ENCODE measurements at regions of chr17 and their contacts with region 1.

Region 1: GRCh38 chr17:76408052-76408849 is 23.8 kb downstream of the SPHK1 start:
- DNase-seq: peak in 1 of 2 donors; percentile 76
- ATAC-seq: peak in 3 of 4 donors; percentile 42 to 55 (median 49)
- H3K4me3 ChIP-seq: no peak overlapping the region
- H3K27ac ChIP-seq: no peak overlapping the region
- H3K4me1 ChIP-seq: peaks cover 36% of the 10 kb centered on the region
- H3K27me3 ChIP-seq: no peaks in the 10 kb centered on the region
- CTCF ChIP-seq: peak; percentile 59

Region 2: DNA sequence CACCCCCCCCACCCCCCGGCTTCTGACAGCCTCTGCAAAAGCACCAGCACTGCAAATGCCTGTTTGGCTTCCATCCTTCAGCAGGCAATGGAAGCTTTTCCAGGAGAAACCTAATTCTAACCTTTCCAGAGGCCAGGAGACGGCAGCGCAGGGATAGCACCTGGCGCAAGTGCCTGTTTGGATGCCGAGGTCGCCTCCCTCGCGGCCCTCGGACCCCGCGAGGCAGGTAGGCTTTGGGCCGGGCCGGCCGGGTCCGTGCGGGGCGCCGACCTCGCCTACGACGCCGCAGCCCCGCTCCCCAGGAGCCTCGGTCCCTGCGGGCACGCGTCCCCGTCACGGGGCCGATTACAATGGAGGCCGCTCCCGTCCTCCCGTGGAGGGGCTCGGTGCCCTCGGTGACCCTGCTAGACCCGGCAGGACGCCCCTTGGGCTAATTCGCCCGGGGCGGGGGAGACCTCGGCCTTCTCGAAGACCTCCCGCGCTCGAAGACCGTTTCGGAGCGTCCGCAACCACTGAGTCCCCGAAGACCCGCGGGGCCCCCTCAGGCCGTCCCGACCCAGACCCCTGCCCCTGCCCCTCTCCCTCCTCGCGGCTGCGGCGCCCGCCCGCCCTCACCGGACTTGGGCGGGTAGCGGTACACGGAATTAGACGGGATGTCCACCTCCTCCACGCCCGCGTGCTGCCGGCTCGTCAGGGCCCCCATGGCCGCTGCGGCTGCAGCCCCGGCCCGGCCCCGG is 168.5 kb before region 1 on chr17:
- intact Hi-C with region 1: no loop called
- DNase-seq: no peak
- ATAC-seq: peak in 3 of 4 donors; percentile 3 to 14 (median 6)
- H3K4me3 ChIP-seq: peak overlapping the region; percentile 76
- H3K27ac ChIP-seq: peak overlapping the region; percentile 89
- H3K4me1 ChIP-seq: peaks cover 36% of the 10 kb centered on the region
- H3K27me3 ChIP-seq: no peaks in the 10 kb centered on the region
- CTCF ChIP-seq: no peak

Region 3: GRCh38 chr17:76446449-76447231 is 38.4 kb after region 1 on chr17:
- intact Hi-C with region 1: loop called in 1 of 2 experiments (anchors 5 kb)
- DNase-seq: no peak
- ATAC-seq: peak; percentile 75 to 86 (median 82)
- H3K4me3 ChIP-seq: peak overlapping the region; percentile 33
- H3K27ac ChIP-seq: peak overlapping the region; percentile 73
- H3K4me1 ChIP-seq: peaks cover 51% of the 10 kb centered on the region
- H3K27me3 ChIP-seq: no peaks in the 10 kb centered on the region
- CTCF ChIP-seq: no peak

Region 4: DNA sequence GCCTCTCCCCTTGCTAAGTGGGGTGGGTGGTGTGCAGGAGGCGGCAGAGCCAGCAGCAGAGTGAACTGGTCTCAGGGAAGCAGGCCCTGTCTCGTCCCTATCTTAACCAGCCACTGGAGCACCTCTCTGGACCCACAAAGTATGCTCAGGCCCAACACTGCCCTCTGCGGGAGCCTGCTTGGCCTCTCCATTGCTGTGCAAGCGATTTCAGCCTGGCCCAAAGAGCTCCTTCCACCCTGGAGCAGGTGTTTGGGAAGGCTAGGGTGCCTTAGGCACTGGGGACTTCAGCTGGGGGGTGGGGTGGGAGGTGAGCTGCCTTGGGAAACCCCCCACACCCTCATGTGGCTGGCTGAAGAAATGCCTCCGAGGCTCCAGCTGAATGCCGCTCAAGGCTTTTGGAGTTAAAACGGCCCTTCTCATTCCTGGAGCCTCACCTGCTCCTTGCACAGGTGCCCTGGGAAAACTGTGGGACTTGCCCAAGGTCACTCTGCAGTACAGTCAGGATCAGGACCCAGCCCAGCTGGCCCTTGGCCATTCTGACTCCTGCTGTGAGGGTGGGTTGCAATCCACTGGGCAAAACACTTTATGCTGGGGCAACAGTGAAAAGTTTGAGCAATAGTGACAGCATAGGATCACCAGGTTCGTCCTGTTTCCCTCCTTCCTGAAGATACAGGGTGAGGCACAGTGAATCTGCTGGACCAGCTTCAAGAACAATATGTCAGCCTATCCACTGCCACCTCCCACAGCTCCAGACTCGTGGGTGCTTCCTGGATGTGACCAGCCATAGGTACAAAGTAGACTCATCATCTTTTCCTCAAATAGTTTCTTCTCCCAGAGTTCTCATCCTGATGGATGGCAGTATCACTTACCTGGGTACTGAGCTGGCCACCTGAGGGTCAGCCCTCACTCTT is 50.6 kb after region 1 on chr17:
- intact Hi-C with region 1: loop called in 1 of 2 experiments (anchors 5 kb)
- DNase-seq: no peak
- ATAC-seq: peak; percentile 69 to 83 (median 73)
- H3K4me3 ChIP-seq: no peak overlapping the region
- H3K27ac ChIP-seq: no peak overlapping the region
- H3K4me1 ChIP-seq: no peaks in the 10 kb centered on the region
- H3K27me3 ChIP-seq: no peaks in the 10 kb centered on the region
- CTCF ChIP-seq: peak; percentile 34

Region 5: DNA sequence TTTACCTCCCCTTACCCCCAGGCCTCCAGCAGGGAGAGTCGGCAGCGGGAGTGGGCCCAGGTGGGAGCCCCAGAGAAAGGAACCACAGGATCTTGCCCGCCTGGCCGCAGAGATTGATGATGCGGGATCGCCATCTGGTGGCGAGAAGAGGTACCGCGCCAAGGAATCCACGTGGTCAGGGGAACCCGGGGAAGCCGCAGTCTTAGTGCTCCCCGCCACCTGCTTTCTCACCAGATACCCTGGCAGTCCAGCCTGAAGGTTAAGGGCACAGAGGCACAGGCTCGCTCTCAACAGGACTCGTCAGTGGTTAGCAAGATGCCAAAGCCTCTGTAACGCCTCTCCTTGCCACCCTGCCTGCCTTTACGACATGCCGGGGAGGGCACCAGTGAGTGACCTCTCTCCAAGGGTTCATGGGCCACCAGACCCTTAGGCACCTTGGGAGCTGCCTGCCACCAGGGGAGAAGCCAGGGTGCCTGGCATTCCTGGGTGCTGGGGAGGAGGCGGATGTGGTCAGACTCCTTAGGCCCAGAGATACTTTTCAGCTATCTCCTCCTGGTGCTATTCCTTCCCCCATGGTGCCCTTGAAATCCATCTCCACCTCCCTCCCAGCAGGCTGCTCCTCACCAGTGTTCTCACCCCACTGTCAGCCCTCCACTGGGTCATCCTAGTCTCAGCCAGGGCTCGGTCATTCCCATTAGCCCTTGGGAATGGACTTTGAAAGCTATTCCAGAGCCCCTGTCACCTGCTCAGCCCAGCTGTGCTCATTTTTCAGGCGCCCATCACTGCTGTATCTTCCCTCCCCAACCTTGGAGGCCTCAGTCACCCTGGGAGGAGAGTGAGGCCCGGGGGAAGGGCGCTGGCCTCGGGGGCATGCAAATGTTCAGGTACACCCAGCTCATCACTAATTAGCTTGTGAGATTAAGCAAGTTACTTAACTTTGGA is 98.4 kb after region 1 on chr17:
- intact Hi-C with region 1: loop called in 1 of 2 experiments (anchors 5 kb)
- DNase-seq: peak; percentile 85 to 92
- ATAC-seq: peak; percentile 82 to 89 (median 85)
- H3K4me3 ChIP-seq: no peak overlapping the region
- H3K27ac ChIP-seq: peak overlapping the region; percentile 32
- H3K4me1 ChIP-seq: peaks cover 4% of the 10 kb centered on the region
- H3K27me3 ChIP-seq: no peaks in the 10 kb centered on the region
- CTCF ChIP-seq: peak; percentile 96